ENCODE measurements at regions of chr1 and their contacts with region 1.

Region 1: DNA sequence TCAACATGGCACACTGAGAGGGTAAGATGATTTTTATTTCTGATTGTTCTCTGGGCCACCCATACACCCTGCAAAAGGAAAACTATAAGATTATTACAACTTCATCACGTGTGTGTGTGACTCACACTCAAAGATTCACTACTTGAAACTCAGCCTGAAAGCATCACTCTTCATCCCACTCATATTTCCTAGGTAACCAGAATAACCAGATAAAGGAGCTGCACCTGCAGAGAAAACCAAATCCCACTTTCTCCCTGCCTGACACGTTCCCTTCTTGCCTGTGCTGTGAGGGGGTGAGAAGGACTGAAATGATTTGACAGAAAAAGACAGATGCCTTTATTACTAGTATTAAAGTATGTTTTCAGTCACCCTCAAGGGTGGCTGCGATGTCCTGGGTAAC is 131.6 kb downstream of the TGFBR3 start:
- DNase-seq: no peak
- H3K4me3 Mint-ChIP-seq: no peak overlapping the region
- H3K27ac Mint-ChIP-seq: peak overlapping the region; percentile 67
- H3K4me1 Mint-ChIP-seq: peaks cover 46% of the 10 kb centered on the region
- H3K27me3 Mint-ChIP-seq: peaks cover 6% of the 10 kb centered on the region

Region 2: GRCh38 chr1:91523482-91523881 is 230.9 kb before region 1 on chr1:
- intact Hi-C with region 1: loop called (anchors 1 kb)
- DNase-seq: no peak
- H3K4me3 Mint-ChIP-seq: no peak overlapping the region
- H3K27ac Mint-ChIP-seq: peak overlapping the region; percentile 33
- H3K4me1 Mint-ChIP-seq: peaks cover 41% of the 10 kb centered on the region
- H3K27me3 Mint-ChIP-seq: no peaks in the 10 kb centered on the region

Region 3: GRCh38 chr1:91673613-91674012 is 80.7 kb before region 1 on chr1:
- intact Hi-C with region 1: loop called (anchors 1 kb)
- DNase-seq: no peak
- H3K4me3 Mint-ChIP-seq: no peak overlapping the region
- H3K27ac Mint-ChIP-seq: peak overlapping the region; percentile 50
- H3K4me1 Mint-ChIP-seq: peaks cover 39% of the 10 kb centered on the region
- H3K27me3 Mint-ChIP-seq: no peaks in the 10 kb centered on the region

Region 4: GRCh38 chr1:91732291-91733107 is 21.8 kb before region 1 on chr1:
- intact Hi-C with region 1: loop called (anchors 1 kb)
- DNase-seq: no peak
- H3K4me3 Mint-ChIP-seq: no peak overlapping the region
- H3K27ac Mint-ChIP-seq: peak overlapping the region; percentile 37
- H3K4me1 Mint-ChIP-seq: peaks cover 51% of the 10 kb centered on the region
- H3K27me3 Mint-ChIP-seq: peaks cover 8% of the 10 kb centered on the region

Region 5: DNA sequence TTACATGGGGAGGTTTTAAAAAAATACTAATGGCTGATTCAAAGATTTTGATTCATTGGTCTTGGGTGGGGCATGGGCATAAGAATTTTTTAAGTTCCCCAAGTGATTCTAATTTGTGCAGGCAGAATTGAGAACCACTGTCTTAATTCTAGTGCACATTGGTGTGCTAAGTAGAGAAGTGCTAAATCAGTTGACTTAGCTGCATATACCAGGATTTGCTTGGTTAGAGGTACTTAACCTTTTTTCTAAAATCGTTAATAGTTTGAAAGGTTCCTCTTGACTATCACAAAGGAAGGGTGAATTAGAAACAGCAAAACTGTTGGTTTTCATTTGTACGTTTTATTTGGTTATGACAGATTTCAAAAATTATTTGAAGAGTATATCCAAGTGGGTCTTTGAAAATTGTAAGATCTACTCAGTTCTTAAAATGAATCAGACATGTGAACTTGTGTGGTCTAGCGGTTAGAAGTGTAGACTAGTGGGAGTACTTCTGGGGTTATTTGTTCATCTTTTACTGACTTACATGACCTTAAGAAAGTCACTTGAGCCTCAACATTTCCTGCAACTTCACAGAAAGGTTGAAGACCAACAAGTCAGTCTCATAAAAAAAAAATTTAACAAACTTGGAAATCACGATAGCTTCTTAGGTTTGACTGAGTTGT is 611.2 kb after region 1 on chr1:
- intact Hi-C with region 1: loop called (anchors 2 kb)
- DNase-seq: peak; percentile 10
- H3K4me3 Mint-ChIP-seq: peak overlapping the region; percentile 3
- H3K27ac Mint-ChIP-seq: peak overlapping the region; percentile 76
- H3K4me1 Mint-ChIP-seq: peaks cover 59% of the 10 kb centered on the region
- H3K27me3 Mint-ChIP-seq: no peaks in the 10 kb centered on the region

Region 6: DNA sequence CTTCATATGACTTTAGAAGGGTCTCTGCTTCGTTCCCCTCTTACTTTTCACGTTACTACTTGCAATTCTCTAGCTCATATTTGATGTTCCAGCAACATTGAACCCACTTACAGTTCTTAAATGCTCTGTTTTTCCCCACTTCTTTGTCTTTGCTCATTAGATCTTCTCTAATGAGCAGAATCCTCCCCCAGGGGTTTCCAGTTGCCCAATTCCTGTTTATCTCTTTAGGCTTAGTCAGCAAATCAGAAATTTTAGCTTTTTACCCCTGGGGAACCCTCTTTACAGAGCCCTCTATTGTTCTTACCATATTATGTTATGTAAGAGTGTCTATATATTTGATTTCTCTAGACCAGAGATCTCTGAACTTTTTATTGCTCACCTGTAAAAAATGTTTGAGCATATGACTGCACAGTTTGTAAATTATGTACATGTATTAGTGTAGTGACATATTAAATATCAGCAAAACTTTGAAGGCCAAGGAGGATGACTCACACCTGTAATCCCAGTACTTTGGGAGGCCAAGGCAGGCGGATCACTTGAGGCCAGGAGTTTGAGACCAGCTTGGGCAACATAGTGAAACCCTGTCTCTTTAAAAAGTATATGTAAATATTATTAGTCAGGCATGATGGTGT is 1765.0 kb after region 1 on chr1:
- intact Hi-C with region 1: no loop called
- DNase-seq: no peak
- H3K4me3 Mint-ChIP-seq: no peak overlapping the region
- H3K27ac Mint-ChIP-seq: no peak overlapping the region
- H3K4me1 Mint-ChIP-seq: no peaks in the 10 kb centered on the region
- H3K27me3 Mint-ChIP-seq: peaks cover 6% of the 10 kb centered on the region